Endothelial cell of umbilical vein (primary cell): ENCODE measurements at regions of chr12 and their contacts with region 1.

Region 1: GRCh38 chr12:41835556-41835955 is 309.1 kb downstream of the GXYLT1 start:
- DNase-seq: no peak
- H3K4me3 ChIP-seq: no peak overlapping the region
- H3K27ac ChIP-seq: no peak overlapping the region
- H3K4me1 ChIP-seq: no peaks in the 10 kb centered on the region
- H3K27me3 ChIP-seq: peaks cover 1 to 3% of the 10 kb centered on the region in 2 experiments
- CTCF ChIP-seq: no peak
- POLR2A ChIP-seq: no peak

Region 2: GRCh38 chr12:41850046-41850445 is 14.5 kb after region 1 on chr12:
- CTCF ChIA-PET with region 1: interaction called, 10 read pairs
- POLR2A ChIA-PET with region 1: no interaction called
- dilution Hi-C with region 1: no loop called
- intact Hi-C with region 1: no loop called
- DNase-seq: peak; percentile 73
- H3K4me3 ChIP-seq: no peak overlapping the region
- H3K27ac ChIP-seq: no peak overlapping the region
- H3K4me1 ChIP-seq: peaks cover 6% of the 10 kb centered on the region
- H3K27me3 ChIP-seq: peaks cover 0 to 2% of the 10 kb centered on the region in 2 experiments
- CTCF ChIP-seq: no peak
- POLR2A ChIP-seq: no peak

Region 3: DNA sequence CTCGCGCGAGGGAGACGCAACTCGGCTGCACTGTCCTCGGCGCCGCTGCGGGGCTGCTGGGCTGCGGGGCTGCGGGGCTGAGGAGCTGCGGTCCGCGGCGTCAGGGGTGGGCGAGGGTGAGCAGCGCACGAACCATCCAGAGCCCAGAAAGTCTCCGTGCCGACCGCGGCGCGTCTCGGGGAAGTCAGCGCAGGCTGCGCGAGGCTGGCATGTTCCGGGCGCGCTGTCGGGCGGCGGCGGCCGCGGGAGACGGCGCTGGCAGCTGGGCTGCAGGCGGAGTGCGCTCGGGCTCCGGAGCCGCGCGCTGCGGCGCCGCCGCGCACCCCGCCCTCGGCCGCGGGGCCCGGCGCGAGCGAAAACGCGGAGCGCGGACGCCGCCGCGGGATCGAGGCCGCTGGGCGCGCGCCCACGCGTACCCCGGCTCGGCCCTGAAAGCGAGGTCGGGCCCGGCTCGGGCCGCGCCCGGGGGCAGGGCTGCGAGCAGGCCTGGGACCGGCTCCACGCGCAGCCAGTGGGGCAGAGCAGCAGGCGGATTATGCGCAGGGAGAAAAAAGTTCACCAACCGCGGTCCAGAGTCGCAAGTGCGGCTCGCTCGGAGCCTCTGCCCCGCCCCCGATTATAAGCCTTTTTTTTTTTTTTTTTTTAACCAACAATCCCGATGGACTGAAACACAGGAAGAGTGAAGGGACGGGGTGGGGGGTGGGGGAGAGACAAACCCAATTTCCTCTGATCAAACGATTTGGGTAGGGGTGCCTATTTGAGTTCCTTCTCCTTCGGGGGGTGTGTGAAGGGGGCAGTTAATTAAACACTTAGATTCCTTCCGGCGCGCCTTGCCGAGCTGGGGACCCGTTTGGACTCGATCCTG is 754.1 kb after region 1 on chr12 and contains the start of gene PRICKLE1:
- CTCF ChIA-PET with region 1: no interaction called
- POLR2A ChIA-PET with region 1: no interaction called
- dilution Hi-C with region 1: no loop called
- intact Hi-C with region 1: no loop called
- DNase-seq: peak; percentile 69
- H3K4me3 ChIP-seq: peak within 1 kb of the TSS; percentile 81 to 99 (median 86)
- H3K27ac ChIP-seq: peak within 1 kb of the TSS; percentile 59
- H3K4me1 ChIP-seq: peaks cover 38% of the 10 kb centered on the region
- H3K27me3 ChIP-seq: no peaks in the 10 kb centered on the region
- CTCF ChIP-seq: no peak
- POLR2A ChIP-seq: peak; percentile 68
- total RNA-seq, gene PRICKLE1: 69.0 and 86.0 TPM in 2 replicates